ENCODE measurements at regions of chr18 and their contacts with region 1.

Region 1: GRCh38 chr18:55589625-55590291 is 1.8 kb upstream of the TCF4 start:
- DNase-seq: peak; percentile 97 to 98
- ATAC-seq: peak; percentile 91 to 97 (median 96)
- H3K4me3 ChIP-seq: peak overlapping the region; percentile 84
- H3K27ac ChIP-seq: peak overlapping the region; percentile 86
- H3K4me1 ChIP-seq: peaks cover 9% of the 10 kb centered on the region
- H3K27me3 ChIP-seq: no peaks in the 10 kb centered on the region
- CTCF ChIP-seq: no peak

Region 2: DNA sequence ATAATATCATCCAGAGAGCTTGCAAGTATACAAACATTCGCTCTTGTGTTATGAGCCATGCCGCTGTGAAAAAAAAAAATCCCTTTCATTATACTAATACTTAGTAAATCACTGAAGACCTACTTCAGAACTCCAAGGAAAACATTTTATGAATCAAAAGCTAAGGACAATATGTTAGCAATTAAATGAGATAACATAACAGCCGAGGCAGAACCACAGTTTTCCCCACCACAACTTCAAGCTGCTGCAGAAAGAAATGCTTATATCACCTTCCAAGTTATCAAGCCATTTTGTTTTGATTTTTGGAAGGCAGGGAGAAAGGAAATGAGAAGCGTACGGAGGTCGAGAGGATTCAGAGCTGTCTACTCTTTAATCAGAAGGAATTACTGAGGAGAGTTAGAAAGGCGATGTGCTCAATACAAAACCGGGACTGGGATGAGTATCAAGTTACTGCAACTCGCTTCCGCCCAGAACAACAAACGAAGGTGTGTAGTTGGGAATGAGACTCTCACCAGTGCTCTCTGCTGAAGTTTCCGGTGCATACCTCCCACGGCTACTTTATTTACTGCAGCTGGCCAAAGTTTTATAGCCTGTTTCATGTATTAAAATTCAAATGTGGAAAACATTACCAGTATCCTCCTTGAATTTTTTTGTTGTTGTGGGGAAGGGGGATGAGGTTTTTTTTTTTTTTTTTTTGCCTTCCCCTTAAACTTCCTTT is 338.3 kb before region 1 on chr18:
- intact Hi-C with region 1: loop called in 1 of 2 experiments (anchors 10 kb)
- DNase-seq: no peak
- ATAC-seq: peak; percentile 66 to 79 (median 72)
- H3K4me3 ChIP-seq: peak overlapping the region; percentile 8
- H3K27ac ChIP-seq: peak overlapping the region; percentile 60
- H3K4me1 ChIP-seq: peaks cover 32% of the 10 kb centered on the region
- H3K27me3 ChIP-seq: no peaks in the 10 kb centered on the region
- CTCF ChIP-seq: no peak

Region 3: GRCh38 chr18:55405893-55406406 is 183.8 kb before region 1 on chr18:
- intact Hi-C with region 1: loop called (anchors 5 kb)
- DNase-seq: peak; percentile 90 to 94
- ATAC-seq: peak; percentile 84 to 93 (median 92)
- H3K4me3 ChIP-seq: peak overlapping the region; percentile 64
- H3K27ac ChIP-seq: peak overlapping the region; percentile 79
- H3K4me1 ChIP-seq: peaks cover 25% of the 10 kb centered on the region
- H3K27me3 ChIP-seq: no peaks in the 10 kb centered on the region
- CTCF ChIP-seq: peak; percentile 36

Region 4: GRCh38 chr18:55422456-55423180 is 167.1 kb before region 1 on chr18:
- intact Hi-C with region 1: loop called (anchors 2 kb)
- DNase-seq: peak; percentile 52 to 66
- ATAC-seq: peak; percentile 62 to 73 (median 65)
- H3K4me3 ChIP-seq: peak overlapping the region; percentile 67
- H3K27ac ChIP-seq: peak overlapping the region; percentile 89
- H3K4me1 ChIP-seq: peaks cover 18% of the 10 kb centered on the region
- H3K27me3 ChIP-seq: no peaks in the 10 kb centered on the region
- CTCF ChIP-seq: no peak

Region 5: GRCh38 chr18:55534547-55534946 is 55.2 kb before region 1 on chr18:
- intact Hi-C with region 1: no loop called
- DNase-seq: no peak
- ATAC-seq: peak in 3 of 4 donors; percentile 61 to 77 (median 67)
- H3K4me3 ChIP-seq: no peak overlapping the region
- H3K27ac ChIP-seq: no peak overlapping the region
- H3K4me1 ChIP-seq: peaks cover 22% of the 10 kb centered on the region
- H3K27me3 ChIP-seq: no peaks in the 10 kb centered on the region
- CTCF ChIP-seq: no peak

Region 6: DNA sequence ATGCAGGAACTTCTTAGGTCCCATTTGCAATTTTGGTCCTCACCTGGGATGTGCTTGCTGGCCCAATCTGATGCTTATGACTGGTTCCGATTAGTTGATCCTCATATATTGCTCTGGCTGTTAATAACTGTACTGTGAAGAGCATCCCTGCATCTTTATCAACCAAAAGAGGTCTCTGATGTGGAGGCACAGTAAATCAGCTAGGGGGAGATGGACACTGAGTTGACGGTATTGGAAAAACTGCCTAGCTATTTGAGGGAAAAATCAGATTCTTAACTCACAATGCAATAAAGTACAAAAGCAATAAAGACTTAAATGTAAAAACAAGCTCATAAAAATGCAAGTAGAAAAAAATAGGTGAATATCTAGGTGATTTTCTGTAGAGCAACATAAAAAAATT is 186.2 kb after region 1 on chr18:
- intact Hi-C with region 1: loop called (anchors 2 to 5 kb)
- DNase-seq: no peak
- ATAC-seq: no peak
- H3K4me3 ChIP-seq: no peak overlapping the region
- H3K27ac ChIP-seq: no peak overlapping the region
- H3K4me1 ChIP-seq: peaks cover 8% of the 10 kb centered on the region
- H3K27me3 ChIP-seq: no peaks in the 10 kb centered on the region
- CTCF ChIP-seq: no peak

Region 7: GRCh38 chr18:56575819-56576663 is 986.3 kb after region 1 on chr18:
- intact Hi-C with region 1: loop called in 1 of 2 experiments (anchors 10 kb)
- DNase-seq: no peak
- ATAC-seq: peak in 3 of 4 donors; percentile 52 to 91 (median 65)
- H3K4me3 ChIP-seq: no peak overlapping the region
- H3K27ac ChIP-seq: no peak overlapping the region
- H3K4me1 ChIP-seq: peaks cover 15% of the 10 kb centered on the region
- H3K27me3 ChIP-seq: peaks cover 0 to 3% (median 0%) of the 10 kb centered on the region in 3 donors
- CTCF ChIP-seq: peak; percentile 72